ENCODE measurements at regions of chr22 and their contacts with region 1.

Region 1: GRCh38 chr22:23281406-23282088 is 101.2 kb downstream of the BCR start:
- DNase-seq: peak; percentile 94
- ATAC-seq: peak; percentile 92
- H3K4me3 Mint-ChIP-seq: no peak overlapping the region
- H3K27ac Mint-ChIP-seq: no peak overlapping the region
- H3K4me1 Mint-ChIP-seq: no peaks in the 10 kb centered on the region; the same call in 1 of the 2 replicates
- H3K27me3 Mint-ChIP-seq: no peaks in the 10 kb centered on the region
- CTCF ChIP-seq: peak; percentile 89

Region 2: DNA sequence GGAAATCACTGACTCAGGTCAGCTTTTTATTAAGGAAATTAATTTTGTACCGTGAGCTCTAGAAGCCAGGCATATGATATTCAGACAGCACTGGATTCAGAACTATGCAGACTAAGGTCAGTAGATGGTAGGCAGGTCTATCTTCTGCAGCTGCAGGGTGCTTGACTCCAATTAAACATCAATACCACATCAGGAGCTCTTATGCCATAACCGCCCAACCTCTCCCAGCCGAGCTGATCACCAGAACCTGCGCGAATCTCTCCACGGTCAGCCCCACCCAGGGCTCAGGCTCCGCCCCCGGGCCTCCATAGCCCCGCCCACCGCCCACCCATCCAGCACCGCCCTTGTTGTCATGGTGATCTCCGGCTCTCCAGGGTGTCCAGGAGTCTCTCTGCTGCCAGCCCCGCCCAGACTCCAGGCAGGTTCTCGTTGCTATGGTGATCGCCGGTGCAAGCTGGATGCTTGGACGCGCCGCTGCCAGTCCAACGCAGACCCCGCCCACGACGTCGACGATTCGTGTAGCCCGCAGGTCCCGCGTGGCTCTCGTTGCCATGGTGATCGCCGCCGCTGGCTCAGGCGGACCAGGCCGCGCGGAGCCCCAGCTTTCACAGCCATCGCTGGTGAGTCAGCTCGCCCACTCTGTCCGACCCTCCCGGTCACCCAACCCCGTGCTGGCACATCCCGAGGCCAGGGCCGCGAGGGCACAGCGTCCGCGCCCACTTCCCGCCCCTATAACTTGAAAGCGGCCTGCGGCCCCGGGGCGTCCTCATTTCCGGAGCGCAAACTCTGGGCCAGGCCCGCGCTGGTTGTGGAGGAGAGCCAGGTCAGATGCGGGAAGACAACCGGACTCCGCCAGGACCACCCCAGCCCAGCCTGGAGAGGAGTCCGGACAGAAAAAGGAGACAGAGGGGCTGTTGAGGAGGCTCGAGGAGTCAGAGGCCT is 136.3 kb before region 1 on chr22 and contains the start of gene RAB36:
- CTCF ChIA-PET with region 1: interaction called, 24 read pairs
- POLR2A ChIA-PET with region 1: no interaction called
- DNase-seq: peak; percentile 100
- ATAC-seq: peak; percentile 82
- H3K4me3 Mint-ChIP-seq: peak within 1 kb of the TSS; percentile 73
- H3K27ac Mint-ChIP-seq: no peak within 1 kb of the TSS
- H3K4me1 Mint-ChIP-seq: peaks cover 37% of the 10 kb centered on the region
- H3K27me3 Mint-ChIP-seq: peaks cover 36% of the 10 kb centered on the region
- CTCF ChIP-seq: no peak
- total RNA-seq, gene RAB36: 0.89 to 1.8 TPM (median 1.1 TPM) in 3 replicates

Region 3: GRCh38 chr22:23178512-23179254 is 102.9 kb before region 1 on chr22:
- CTCF ChIA-PET with region 1: interaction called, 114 read pairs
- POLR2A ChIA-PET with region 1: interaction called, 4 read pairs
- DNase-seq: peak; percentile 84
- ATAC-seq: peak; percentile 57
- H3K4me3 Mint-ChIP-seq: no peak overlapping the region; the same call in 1 of the 2 replicates
- H3K27ac Mint-ChIP-seq: no peak overlapping the region
- H3K4me1 Mint-ChIP-seq: peaks cover 39% of the 10 kb centered on the region
- H3K27me3 Mint-ChIP-seq: no peaks in the 10 kb centered on the region; the same call in none of the 2 replicates
- CTCF ChIP-seq: peak; percentile 88

Region 4: DNA sequence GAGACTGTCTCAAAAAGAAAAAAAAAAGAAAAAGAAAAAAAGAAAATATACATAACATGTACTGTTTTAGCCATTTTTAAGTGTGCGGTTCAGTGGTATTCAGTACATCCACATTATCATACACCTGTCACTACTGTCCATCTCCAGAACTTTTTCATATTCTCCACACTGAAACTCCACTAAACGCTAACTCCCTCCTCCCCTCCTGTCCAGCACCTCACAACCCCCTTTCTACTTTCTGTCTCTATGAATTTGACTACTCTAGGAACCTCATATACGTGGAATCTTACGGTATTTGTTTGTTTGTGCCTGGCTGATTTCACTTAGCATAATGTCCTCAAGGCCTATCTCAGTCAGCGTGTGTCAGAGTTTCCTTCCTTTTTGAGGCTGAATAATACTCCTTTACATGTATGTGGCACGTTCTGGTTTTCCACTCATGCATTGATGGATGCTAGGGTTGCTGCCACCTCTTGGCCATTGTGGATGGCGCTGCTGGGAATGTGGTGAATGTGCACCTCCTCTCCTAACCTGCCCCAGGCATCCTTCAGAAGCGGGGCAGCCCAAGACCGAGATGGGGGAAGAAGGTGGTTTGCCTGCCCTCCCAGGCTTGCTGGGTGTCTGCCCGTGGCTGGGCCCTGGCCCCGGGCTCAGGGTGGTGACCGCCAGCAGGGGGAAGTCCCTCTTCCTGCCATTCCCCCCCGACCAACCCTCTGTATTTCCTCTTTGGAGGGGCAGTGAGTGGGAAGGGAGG is 40.7 kb before region 1 on chr22:
- CTCF ChIA-PET with region 1: interaction called, 21 read pairs
- POLR2A ChIA-PET with region 1: no interaction called
- DNase-seq: peak; percentile 62
- ATAC-seq: peak; percentile 6
- H3K4me3 Mint-ChIP-seq: no peak overlapping the region
- H3K27ac Mint-ChIP-seq: peak overlapping the region; percentile 100
- H3K4me1 Mint-ChIP-seq: peaks cover 88% of the 10 kb centered on the region
- H3K27me3 Mint-ChIP-seq: no peaks in the 10 kb centered on the region
- CTCF ChIP-seq: no peak

Region 5: GRCh38 chr22:23263651-23264555 is 17.6 kb before region 1 on chr22:
- CTCF ChIA-PET with region 1: interaction called, 47 read pairs
- POLR2A ChIA-PET with region 1: no interaction called
- DNase-seq: no peak
- ATAC-seq: no peak
- H3K4me3 Mint-ChIP-seq: no peak overlapping the region
- H3K27ac Mint-ChIP-seq: peak overlapping the region; percentile 72
- H3K4me1 Mint-ChIP-seq: peaks cover 45% of the 10 kb centered on the region
- H3K27me3 Mint-ChIP-seq: no peaks in the 10 kb centered on the region
- CTCF ChIP-seq: no peak